ENCODE measurements at regions of chr14 and their contacts with region 1.

Region 1: GRCh38 chr14:77409131-77409533 is 14.2 kb downstream of the NOXRED1 start:
- DNase-seq: peak; percentile 38 to 42
- H3K4me3 ChIP-seq: no peak overlapping the region
- H3K4me3 Mint-ChIP-seq: no peak overlapping the region
- H3K27ac Mint-ChIP-seq: no peak overlapping the region
- H3K4me1 ChIP-seq: no peaks in the 10 kb centered on the region
- H3K4me1 Mint-ChIP-seq: no peaks in the 10 kb centered on the region
- H3K27me3 ChIP-seq: no peaks in the 10 kb centered on the region
- H3K27me3 Mint-ChIP-seq: no peaks in the 10 kb centered on the region
- CTCF ChIP-seq: peak; percentile 45 to 61

Region 2: DNA sequence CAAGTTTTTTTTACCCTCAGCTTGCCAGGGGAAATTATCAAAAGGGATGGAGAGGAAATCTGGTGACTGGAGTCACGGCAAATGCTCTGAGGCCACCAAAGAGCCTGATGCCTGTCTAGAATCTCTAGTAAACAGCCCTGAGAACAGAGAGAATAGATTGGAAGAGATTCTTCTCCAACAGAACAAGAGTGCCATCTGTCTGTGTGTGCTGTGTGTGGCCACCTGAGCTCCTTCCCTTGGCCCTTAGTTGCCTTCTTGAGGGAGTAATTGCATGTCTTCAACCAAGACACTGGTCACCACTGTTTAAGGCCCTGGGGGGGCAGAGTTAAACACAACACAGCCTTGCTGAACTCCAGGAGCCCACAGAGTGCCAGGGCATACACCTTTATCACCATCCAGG is 83.0 kb before region 1 on chr14:
- CTCF ChIA-PET with region 1: interaction called, 6 read pairs
- POLR2A ChIA-PET with region 1: no interaction called
- intact Hi-C with region 1: loop called (anchors 2 kb)
- DNase-seq: no peak
- H3K4me3 ChIP-seq: no peak overlapping the region
- H3K4me3 Mint-ChIP-seq: no peak overlapping the region
- H3K27ac Mint-ChIP-seq: no peak overlapping the region
- H3K4me1 ChIP-seq: no peaks in the 10 kb centered on the region
- H3K4me1 Mint-ChIP-seq: peaks cover 7% of the 10 kb centered on the region
- H3K27me3 ChIP-seq: no peaks in the 10 kb centered on the region
- H3K27me3 Mint-ChIP-seq: no peaks in the 10 kb centered on the region
- CTCF ChIP-seq: no peak

Measured in Caco-2 (cell line).